ENCODE measurements at regions of chrX and their contacts with region 1.

Region 1: DNA sequence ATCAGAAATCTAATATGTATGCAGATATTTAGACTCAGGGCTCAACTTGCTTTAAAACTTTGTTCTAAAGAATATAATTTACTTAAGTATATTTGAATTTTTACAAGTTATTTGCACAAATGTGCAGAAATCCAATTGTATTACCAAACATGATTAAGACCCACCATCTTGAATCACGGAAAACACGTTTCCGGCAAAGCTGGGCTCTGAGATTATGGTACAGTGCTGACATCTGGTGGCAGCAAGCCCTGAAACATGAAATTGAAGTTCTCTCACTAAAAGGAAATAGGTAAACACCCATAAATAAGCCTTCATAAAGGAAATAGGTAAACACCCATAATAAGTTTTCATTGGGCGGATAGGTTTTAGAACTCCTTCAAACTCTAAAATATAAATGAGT is 98.3 kb upstream of the MAOA start:
- DNase-seq: peak in 4 of 5 donors; percentile 22 to 52 (median 30)
- ATAC-seq: peak in 1 of 4 donors; percentile 62
- H3K4me3 ChIP-seq: no peak overlapping the region
- H3K27ac ChIP-seq: no peak overlapping the region
- H3K4me1 ChIP-seq: peaks cover 0 to 6% (median 0%) of the 10 kb centered on the region in 12 donors
- H3K27me3 ChIP-seq: peaks cover 0 to 1% (median 0%) of the 10 kb centered on the region in 9 donors
- CTCF ChIP-seq: peak; percentile 41 to 71 (median 60)
- POLR2A ChIP-seq: no peak

Region 2: GRCh38 chrX:41796577-41796976 is 1761.2 kb before region 1 on chrX:
- intact Hi-C with region 1: loop called in 6 of 10 experiments (anchors 5 to 10 kb)
- DNase-seq: no peak
- ATAC-seq: no peak
- H3K4me3 ChIP-seq: no peak overlapping the region
- H3K27ac ChIP-seq: no peak overlapping the region
- H3K4me1 ChIP-seq: no peaks in the 10 kb centered on the region
- H3K27me3 ChIP-seq: peaks cover 0 to 4% (median 0%) of the 10 kb centered on the region in 9 donors
- CTCF ChIP-seq: no peak
- POLR2A ChIP-seq: no peak

Region 3: GRCh38 chrX:43357741-43358140 is 200.1 kb before region 1 on chrX:
- intact Hi-C with region 1: loop called in 1 of 10 experiments (anchors 10 kb)
- DNase-seq: no peak
- ATAC-seq: no peak
- H3K4me3 ChIP-seq: no peak overlapping the region
- H3K27ac ChIP-seq: no peak overlapping the region
- H3K4me1 ChIP-seq: no peaks in the 10 kb centered on the region
- H3K27me3 ChIP-seq: peaks cover 0 to 6% (median 0%) of the 10 kb centered on the region in 9 donors
- CTCF ChIP-seq: no peak
- POLR2A ChIP-seq: no peak

Region 4: DNA sequence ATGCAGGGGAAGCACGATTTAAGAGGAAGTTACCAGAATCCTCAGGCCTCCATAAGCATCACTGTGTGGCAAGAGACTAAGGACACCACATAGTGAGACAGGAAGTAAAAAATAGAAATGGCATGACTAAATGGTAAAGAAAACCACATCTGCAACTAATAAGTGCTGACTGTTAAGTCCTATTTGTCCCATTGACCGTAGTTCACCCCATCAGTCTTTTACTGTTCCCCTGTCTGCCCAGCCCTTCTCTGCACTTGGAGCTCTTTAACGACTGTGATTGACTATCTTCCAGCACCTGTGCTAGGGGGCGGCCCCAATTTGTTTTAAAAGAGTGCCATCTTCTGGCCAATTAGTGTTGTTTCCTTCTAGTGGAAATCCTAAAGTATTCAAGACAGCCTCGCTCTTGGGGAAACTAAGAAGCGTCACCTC is 192.5 kb after region 1 on chrX:
- intact Hi-C with region 1: loop called (anchors 1 to 2 kb)
- DNase-seq: peak in 4 of 5 donors; percentile 36 to 44 (median 38)
- ATAC-seq: peak; percentile 79 to 88 (median 84)
- H3K4me3 ChIP-seq: no peak overlapping the region
- H3K27ac ChIP-seq: no peak overlapping the region
- H3K4me1 ChIP-seq: peaks cover 0 to 4% (median 0%) of the 10 kb centered on the region in 12 donors
- H3K27me3 ChIP-seq: peaks cover 0 to 9% (median 0%) of the 10 kb centered on the region in 9 donors
- CTCF ChIP-seq: peak; percentile 36 to 65 (median 58)
- POLR2A ChIP-seq: no peak

Region 5: GRCh38 chrX:43949669-43950068 is 391.9 kb after region 1 on chrX:
- intact Hi-C with region 1: loop called in 1 of 10 experiments (anchors 10 kb)
- DNase-seq: peak in 3 of 5 donors; percentile 14 to 50 (median 41)
- ATAC-seq: peak in 3 of 4 donors; percentile 55 to 65 (median 63)
- H3K4me3 ChIP-seq: no peak overlapping the region
- H3K27ac ChIP-seq: no peak overlapping the region
- H3K4me1 ChIP-seq: no peaks in the 10 kb centered on the region
- H3K27me3 ChIP-seq: peaks cover 0 to 49% (median 0%) of the 10 kb centered on the region in 9 donors
- CTCF ChIP-seq: peak in 10 of 12 donors; percentile 10 to 51 (median 30)
- POLR2A ChIP-seq: no peak